Activated CD4-positive, alpha-beta T cell treated with anti-CD3 and anti-CD28 coated beads for 36 hours (primary cell): ENCODE measurements at regions of chr12 and their contacts with region 1.

Region 1: GRCh38 chr12:21683115-21683514 is 25.5 kb upstream of the LDHB start:
- DNase-seq: no peak
- ATAC-seq: no peak
- H3K4me3 Mint-ChIP-seq: no peak overlapping the region
- H3K27ac Mint-ChIP-seq: no peak overlapping the region
- H3K4me1 Mint-ChIP-seq: peaks cover 22% of the 10 kb centered on the region
- H3K27me3 Mint-ChIP-seq: no peaks in the 10 kb centered on the region

Region 2: GRCh38 chr12:21308785-21309184 is 374.3 kb before region 1 on chr12:
- CTCF ChIA-PET with region 1: interaction called, 6 read pairs
- POLR2A ChIA-PET with region 1: no interaction called
- intact Hi-C with region 1: loop called (anchors 1 to 5 kb)
- DNase-seq: no peak
- ATAC-seq: no peak
- H3K4me3 Mint-ChIP-seq: no peak overlapping the region
- H3K27ac Mint-ChIP-seq: no peak overlapping the region
- H3K4me1 Mint-ChIP-seq: no peaks in the 10 kb centered on the region
- H3K27me3 Mint-ChIP-seq: peaks cover 5% of the 10 kb centered on the region